Astrocyte of the cerebellum (primary cell): ENCODE measurements at regions of chr13 and their contacts with region 1.

Region 1: DNA sequence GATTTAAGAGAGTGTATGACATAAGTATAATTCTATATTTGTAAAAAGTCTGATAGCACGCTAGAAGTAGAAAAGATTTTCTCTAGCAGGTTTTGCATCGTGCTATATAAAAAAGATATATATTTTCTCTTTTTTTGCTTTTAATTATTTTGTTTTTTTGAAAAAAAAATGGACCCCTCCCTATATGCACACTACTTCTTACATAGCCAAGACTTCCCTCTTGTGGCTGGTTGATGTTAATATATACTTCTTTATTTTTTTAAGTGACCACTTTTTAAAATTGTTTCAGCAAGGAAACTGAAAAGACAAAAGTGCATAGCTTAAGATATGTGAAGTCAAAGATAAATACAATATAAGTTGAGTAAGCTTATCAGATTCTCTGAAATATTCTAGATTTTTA is 1202.8 kb downstream of the DIAPH3 start:
- DNase-seq: peak; percentile 35
- H3K4me3 ChIP-seq: no peak overlapping the region
- CTCF ChIP-seq: peak; percentile 34

Region 2: GRCh38 chr13:57624565-57625435 is 1336.1 kb before region 1 on chr13:
- in situ Hi-C with region 1: loop called (anchors 5 kb)
- DNase-seq: peak; percentile 52
- H3K4me3 ChIP-seq: no peak overlapping the region
- CTCF ChIP-seq: peak; percentile 88

Region 3: GRCh38 chr13:58907347-58907746 is 53.5 kb before region 1 on chr13:
- in situ Hi-C with region 1: no loop called
- DNase-seq: no peak
- H3K4me3 ChIP-seq: no peak overlapping the region
- CTCF ChIP-seq: peak; percentile 9

Region 4: DNA sequence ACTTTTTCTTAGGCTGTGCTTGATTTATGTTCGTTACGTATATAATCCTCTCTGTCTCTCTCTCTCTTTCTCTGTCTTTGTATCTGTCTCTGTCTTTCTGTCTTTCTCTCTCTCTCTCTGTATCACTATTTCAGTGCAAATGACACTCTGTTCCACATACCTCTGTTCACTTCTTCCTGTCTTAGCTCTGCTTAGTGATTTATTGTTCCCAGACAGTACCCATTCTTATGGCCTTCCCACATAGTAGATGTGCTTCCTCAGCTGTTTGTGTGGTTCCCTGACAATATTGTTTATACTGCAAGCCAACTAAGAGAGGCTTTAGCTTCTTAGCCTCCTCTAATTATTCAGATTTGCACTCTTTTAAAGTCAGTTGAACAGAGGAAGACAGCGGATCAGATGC is 41.3 kb before region 1 on chr13:
- in situ Hi-C with region 1: no loop called
- DNase-seq: no peak
- H3K4me3 ChIP-seq: no peak overlapping the region
- CTCF ChIP-seq: no peak

Region 5: GRCh38 chr13:59318320-59318930 is 357.5 kb after region 1 on chr13:
- in situ Hi-C with region 1: loop called (anchors 10 kb)
- DNase-seq: peak; percentile 65
- H3K4me3 ChIP-seq: no peak overlapping the region
- CTCF ChIP-seq: peak; percentile 72